Activated CD4-positive, alpha-beta memory T cell treated with anti-CD3 and anti-CD28 coated beads for 36 hours (primary cell): ENCODE measurements at regions of chr6 and their contacts with region 1.

Region 1: DNA sequence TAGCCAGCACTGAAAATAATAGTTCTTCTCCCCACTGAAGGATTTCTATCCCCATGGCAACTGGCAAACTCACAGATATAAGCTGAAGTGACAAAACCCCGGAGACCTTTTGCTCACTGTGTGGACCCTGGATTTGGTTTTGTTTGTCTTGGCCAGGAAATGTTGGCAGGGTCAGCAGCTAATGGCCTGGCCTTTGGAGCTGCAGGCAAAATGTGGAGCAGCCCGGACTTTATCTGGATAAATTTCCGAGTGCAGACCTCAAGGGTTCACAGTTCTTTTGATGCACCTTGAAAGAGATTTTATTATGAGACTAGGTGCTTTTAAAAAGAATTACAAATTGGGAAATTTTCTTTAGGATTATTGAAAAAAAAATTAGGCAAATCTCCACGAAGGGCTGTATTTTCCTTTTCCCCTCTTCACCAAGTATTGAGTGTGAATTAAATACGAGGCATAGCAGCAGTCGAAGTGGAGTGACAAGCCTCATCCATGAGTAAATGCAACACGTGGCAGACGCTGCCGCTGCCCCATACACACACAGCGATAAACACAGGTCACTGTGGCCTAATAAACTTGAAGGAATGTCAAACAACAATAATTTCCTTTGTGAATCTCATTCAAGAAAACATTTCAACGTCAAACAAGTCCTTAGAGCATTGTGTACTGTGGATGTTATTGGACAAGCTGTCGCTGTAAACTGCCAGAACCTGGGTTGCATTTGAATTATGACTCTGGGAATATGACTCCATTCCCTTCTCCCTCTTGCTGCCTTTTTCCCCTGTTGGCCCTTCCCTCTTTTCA is 35.1 kb upstream of the CCN6 start:
- DNase-seq: no peak
- H3K4me3 Mint-ChIP-seq: peak overlapping the region; percentile 3
- H3K27ac Mint-ChIP-seq: peak overlapping the region; percentile 90
- H3K4me1 Mint-ChIP-seq: peaks cover 56% of the 10 kb centered on the region
- H3K27me3 Mint-ChIP-seq: no peaks in the 10 kb centered on the region

Region 2: GRCh38 chr6:111823831-111824607 is 194.8 kb before region 1 on chr6:
- CTCF ChIA-PET with region 1: interaction called, 3 read pairs
- POLR2A ChIA-PET with region 1: interaction called, 15 read pairs
- intact Hi-C with region 1: no loop called
- DNase-seq: peak; percentile 44
- H3K4me3 Mint-ChIP-seq: peak overlapping the region; percentile 21
- H3K27ac Mint-ChIP-seq: peak overlapping the region; percentile 91
- H3K4me1 Mint-ChIP-seq: peaks cover 80% of the 10 kb centered on the region
- H3K27me3 Mint-ChIP-seq: no peaks in the 10 kb centered on the region

Region 3: DNA sequence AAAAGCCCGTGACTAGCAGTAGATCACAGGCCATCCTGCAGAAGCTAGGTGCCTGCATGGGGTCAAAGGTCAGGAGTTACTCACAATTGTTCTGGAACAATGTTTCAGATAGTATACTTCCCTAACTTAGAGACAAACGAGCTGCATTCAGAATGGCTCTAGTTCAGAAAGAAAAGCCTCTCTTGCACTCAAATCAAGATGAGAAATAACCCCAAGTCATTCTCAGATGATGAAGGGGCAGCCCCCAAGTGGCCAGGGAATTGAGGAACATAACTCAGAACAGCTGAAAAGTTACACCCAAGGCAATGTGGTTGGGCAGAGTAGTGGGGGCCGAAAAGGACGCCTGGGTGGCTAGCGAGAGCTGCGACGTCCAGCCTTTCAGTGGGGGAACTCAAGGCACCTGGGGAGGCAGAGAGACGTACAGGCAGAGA is 173.4 kb before region 1 on chr6:
- CTCF ChIA-PET with region 1: interaction called, 4 read pairs
- POLR2A ChIA-PET with region 1: interaction called, 3 read pairs
- intact Hi-C with region 1: loop called (anchors 1 kb)
- DNase-seq: peak; percentile 56
- H3K4me3 Mint-ChIP-seq: peak overlapping the region; percentile 14
- H3K27ac Mint-ChIP-seq: peak overlapping the region; percentile 86
- H3K4me1 Mint-ChIP-seq: peaks cover 62% of the 10 kb centered on the region
- H3K27me3 Mint-ChIP-seq: no peaks in the 10 kb centered on the region

Region 4: GRCh38 chr6:111973118-111973761 is 45.6 kb before region 1 on chr6:
- CTCF ChIA-PET with region 1: no interaction called
- POLR2A ChIA-PET with region 1: interaction called, 3 read pairs
- intact Hi-C with region 1: loop called (anchors 1 kb)
- DNase-seq: peak; percentile 81
- H3K4me3 Mint-ChIP-seq: peak overlapping the region; percentile 59
- H3K27ac Mint-ChIP-seq: peak overlapping the region; percentile 89
- H3K4me1 Mint-ChIP-seq: peaks cover 63% of the 10 kb centered on the region
- H3K27me3 Mint-ChIP-seq: no peaks in the 10 kb centered on the region

Region 5: GRCh38 chr6:112029045-112029822 is 10.4 kb after region 1 on chr6:
- CTCF ChIA-PET with region 1: interaction called, 193 read pairs
- POLR2A ChIA-PET with region 1: interaction called, 15 read pairs
- intact Hi-C with region 1: loop called (anchors 1 kb)
- DNase-seq: peak; percentile 86
- H3K4me3 Mint-ChIP-seq: no peak overlapping the region
- H3K27ac Mint-ChIP-seq: peak overlapping the region; percentile 89
- H3K4me1 Mint-ChIP-seq: peaks cover 70% of the 10 kb centered on the region
- H3K27me3 Mint-ChIP-seq: no peaks in the 10 kb centered on the region

Region 6: DNA sequence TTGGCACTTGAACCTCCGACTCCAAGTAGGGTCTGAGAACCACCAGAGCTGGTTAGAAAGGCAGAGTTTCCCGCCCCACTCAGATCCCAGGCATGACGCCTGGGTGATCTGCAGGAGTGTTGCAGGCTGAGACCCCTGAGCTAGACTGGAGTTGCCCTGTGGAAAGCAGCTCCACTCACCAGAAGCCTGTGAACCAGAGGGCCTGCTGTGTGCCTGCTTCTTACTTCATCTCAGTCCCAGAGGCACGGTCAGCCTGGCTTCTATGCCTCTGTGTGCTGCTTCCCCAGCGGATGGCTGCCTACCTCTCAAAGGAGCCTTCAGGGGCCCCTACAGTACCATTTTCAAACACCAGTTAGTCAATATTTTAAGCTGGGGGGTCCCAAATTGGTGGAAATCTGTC is 19.4 kb after region 1 on chr6:
- CTCF ChIA-PET with region 1: interaction called, 193 read pairs
- POLR2A ChIA-PET with region 1: interaction called, 20 read pairs
- intact Hi-C with region 1: loop called (anchors 1 kb)
- DNase-seq: no peak
- H3K4me3 Mint-ChIP-seq: no peak overlapping the region
- H3K27ac Mint-ChIP-seq: no peak overlapping the region
- H3K4me1 Mint-ChIP-seq: peaks cover 62% of the 10 kb centered on the region
- H3K27me3 Mint-ChIP-seq: no peaks in the 10 kb centered on the region

Region 7: GRCh38 chr6:112139052-112139451 is 120.2 kb after region 1 on chr6:
- CTCF ChIA-PET with region 1: no interaction called
- POLR2A ChIA-PET with region 1: no interaction called
- intact Hi-C with region 1: no loop called
- DNase-seq: no peak
- H3K4me3 Mint-ChIP-seq: no peak overlapping the region
- H3K27ac Mint-ChIP-seq: no peak overlapping the region
- H3K4me1 Mint-ChIP-seq: peaks cover 6% of the 10 kb centered on the region
- H3K27me3 Mint-ChIP-seq: peaks cover 8% of the 10 kb centered on the region

Region 8: GRCh38 chr6:112153926-112154607 is 135.2 kb after region 1 on chr6:
- CTCF ChIA-PET with region 1: no interaction called
- POLR2A ChIA-PET with region 1: no interaction called
- intact Hi-C with region 1: loop called (anchors 2 kb)
- DNase-seq: no peak
- H3K4me3 Mint-ChIP-seq: no peak overlapping the region
- H3K27ac Mint-ChIP-seq: peak overlapping the region; percentile 67
- H3K4me1 Mint-ChIP-seq: peaks cover 25% of the 10 kb centered on the region
- H3K27me3 Mint-ChIP-seq: peaks cover 12% of the 10 kb centered on the region

Region 9: GRCh38 chr6:112307707-112308106 is 288.9 kb after region 1 on chr6:
- CTCF ChIA-PET with region 1: no interaction called
- POLR2A ChIA-PET with region 1: no interaction called
- intact Hi-C with region 1: no loop called
- DNase-seq: no peak
- H3K4me3 Mint-ChIP-seq: no peak overlapping the region
- H3K27ac Mint-ChIP-seq: no peak overlapping the region
- H3K4me1 Mint-ChIP-seq: no peaks in the 10 kb centered on the region
- H3K27me3 Mint-ChIP-seq: peaks cover 18% of the 10 kb centered on the region